ENCODE measurements at regions of chr10 and their contacts with region 1.

Region 1: GRCh38 chr10:47024399-47025252 is 113.4 kb downstream of the PTPN20 start:
- DNase-seq: peak in 2 of 3 donors; percentile 79 to 83
- ATAC-seq: peak; percentile 82
- H3K4me3 ChIP-seq: no peak overlapping the region
- H3K4me1 ChIP-seq: no peaks in the 10 kb centered on the region
- CTCF ChIP-seq: peak; percentile 71

Region 2: DNA sequence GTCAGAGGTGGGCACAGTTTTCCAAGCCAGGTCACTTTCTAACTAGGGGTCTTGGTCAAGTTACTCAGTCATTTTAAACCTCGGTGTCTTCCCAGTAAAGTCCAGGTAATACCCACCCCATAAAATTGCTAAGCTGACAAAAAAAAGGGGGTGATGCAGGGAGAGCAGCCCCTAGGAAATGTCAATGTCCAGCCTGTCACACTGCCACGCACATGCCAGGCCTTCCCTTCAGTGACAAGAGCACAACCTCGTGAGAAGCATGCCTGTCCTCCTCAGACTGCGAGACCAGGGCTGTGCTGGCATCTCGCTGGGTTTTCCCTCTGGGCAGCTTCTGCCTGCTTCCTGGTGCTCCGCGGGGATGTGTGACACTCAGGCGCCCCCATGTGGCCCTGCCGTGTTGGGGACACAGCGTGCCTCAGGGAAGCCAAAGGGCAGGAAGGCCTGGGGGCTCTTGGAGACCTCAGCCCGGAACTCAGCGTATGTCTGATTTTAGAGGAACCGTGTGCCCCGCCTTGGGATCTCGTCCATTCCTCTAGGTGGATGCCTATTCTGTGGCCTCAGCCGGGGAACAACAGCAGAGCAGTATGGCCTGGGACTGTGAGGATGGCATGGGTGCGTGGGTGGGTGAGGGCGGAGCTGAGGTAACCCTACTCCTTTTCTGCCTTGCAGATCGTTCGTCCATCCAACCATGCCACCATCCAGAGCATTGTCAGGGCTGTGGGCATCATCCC is 287.5 kb after region 1 on chr10:
- intact Hi-C with region 1: loop called in 1 of 2 experiments (anchors 10 kb)
- DNase-seq: peak; percentile 89 to 93 (median 91)
- ATAC-seq: peak; percentile 94
- H3K4me3 ChIP-seq: no peak overlapping the region
- H3K4me1 ChIP-seq: peaks cover 10% of the 10 kb centered on the region
- CTCF ChIP-seq: peak; percentile 78

Region 3: DNA sequence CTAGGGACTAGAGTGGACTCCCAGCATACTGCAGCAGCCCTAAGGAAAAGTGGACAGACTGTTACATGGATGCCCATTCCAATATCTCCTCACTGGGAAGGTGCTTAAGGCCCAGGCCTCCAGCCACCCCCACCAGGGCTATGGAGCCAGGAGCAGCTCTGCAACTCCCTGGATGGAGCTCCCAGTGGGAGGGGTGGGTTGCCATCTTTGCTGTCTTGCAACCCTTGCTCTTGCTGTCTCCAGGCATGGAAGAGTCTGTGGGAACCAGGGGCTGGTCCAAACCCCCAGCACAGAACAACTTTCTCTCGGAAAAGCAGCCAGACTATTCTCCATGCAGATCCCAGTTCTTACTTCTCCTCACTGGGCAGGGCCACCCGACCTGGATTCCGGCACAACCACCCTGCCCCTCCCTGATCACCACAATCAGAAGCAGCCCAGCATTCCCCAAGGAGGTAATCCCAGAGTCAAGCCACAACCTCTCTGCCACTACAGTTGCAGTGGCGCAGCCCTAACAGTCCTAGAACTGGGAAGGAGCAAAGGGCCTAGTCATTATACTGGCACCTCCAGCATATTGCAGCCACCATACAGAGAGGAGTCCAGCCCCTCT is 401.3 kb after region 1 on chr10:
- intact Hi-C with region 1: no loop called
- DNase-seq: no peak
- ATAC-seq: no peak
- H3K4me3 ChIP-seq: no peak overlapping the region
- H3K4me1 ChIP-seq: no peaks in the 10 kb centered on the region
- CTCF ChIP-seq: no peak

Measured in mucosa of descending colon (tissue), 3 donors.